CD14-positive monocyte (primary cell): ENCODE measurements at regions of chr9 and their contacts with region 1.

Region 1: GRCh38 chr9:92963831-92964626 is 16.7 kb downstream of the FGD3 start:
- DNase-seq: peak; percentile 84 to 89 (median 87)
- H3K4me3 ChIP-seq: peak overlapping the region; percentile 60 to 94 (median 90)
- H3K4me3 Mint-ChIP-seq: peak overlapping the region; percentile 97 to 100
- H3K27ac ChIP-seq: peak overlapping the region; percentile 91 to 97
- H3K27ac Mint-ChIP-seq: peak overlapping the region; percentile 96 to 100 (median 99)
- H3K4me1 ChIP-seq: peaks cover 49 to 56% of the 10 kb centered on the region in 2 donors
- H3K4me1 Mint-ChIP-seq: peaks cover 50% of the 10 kb centered on the region
- H3K27me3 ChIP-seq: no peaks in the 10 kb centered on the region
- H3K27me3 Mint-ChIP-seq: no peaks in the 10 kb centered on the region
- CTCF ChIP-seq: no peak

Region 2: DNA sequence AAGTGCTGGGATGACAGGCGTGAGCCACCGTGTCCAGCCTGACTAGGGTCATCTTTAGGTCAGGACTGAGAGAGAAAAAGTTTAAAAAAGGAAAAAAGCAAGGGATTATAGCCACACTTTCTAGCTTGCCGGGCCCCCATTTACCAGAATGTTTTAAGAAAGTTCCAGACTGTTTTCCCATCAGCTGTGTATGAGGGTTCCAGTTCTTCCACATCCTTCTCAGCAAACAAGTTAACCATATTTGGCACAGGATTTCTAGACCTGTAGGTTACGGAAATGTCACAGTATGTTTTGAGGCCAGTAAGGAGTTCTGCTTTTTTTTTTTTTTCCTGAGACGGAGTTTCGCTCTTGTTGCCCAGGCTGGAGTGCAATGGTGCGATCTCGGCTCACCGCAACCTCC is 480.3 kb after region 1 on chr9:
- intact Hi-C with region 1: loop called in 1 of 2 experiments (anchors 10 kb)
- DNase-seq: no peak
- H3K4me3 ChIP-seq: no peak overlapping the region
- H3K4me3 Mint-ChIP-seq: no peak overlapping the region
- H3K27ac ChIP-seq: no peak overlapping the region
- H3K27ac Mint-ChIP-seq: peak overlapping the region in 1 of 7 donors; percentile 82
- H3K4me1 ChIP-seq: peaks cover 0 to 2% of the 10 kb centered on the region in 2 donors
- H3K4me1 Mint-ChIP-seq: no peaks in the 10 kb centered on the region
- H3K27me3 ChIP-seq: no peaks in the 10 kb centered on the region
- H3K27me3 Mint-ChIP-seq: peaks cover 0 to 6% (median 3%) of the 10 kb centered on the region in 3 donors
- CTCF ChIP-seq: no peak